ENCODE measurements at regions of chr3 and their contacts with region 1.

Region 1: GRCh38 chr3:79521238-79521848 is 246.5 kb downstream of the ROBO1 start:
- DNase-seq: no peak
- H3K4me3 ChIP-seq: no peak overlapping the region
- H3K27ac ChIP-seq: no peak overlapping the region
- H3K4me1 ChIP-seq: no peaks in the 10 kb centered on the region
- H3K27me3 ChIP-seq: no peaks in the 10 kb centered on the region
- CTCF ChIP-seq: peak in 2 of 3 experiments; percentile 49 to 64; a peak in 3 of 4 replicates
- EP300 ChIP-seq: no peak
- POLR2A ChIP-seq: no peak
- RAD21 ChIP-seq: peak; percentile 87 to 89

Region 2: GRCh38 chr3:79497447-79498111 is 23.8 kb before region 1 on chr3:
- CTCF ChIA-PET with region 1: interaction called, 18 read pairs
- POLR2A ChIA-PET with region 1: no interaction called
- DNase-seq: no peak
- H3K4me3 ChIP-seq: no peak overlapping the region
- H3K27ac ChIP-seq: no peak overlapping the region
- H3K4me1 ChIP-seq: no peaks in the 10 kb centered on the region
- H3K27me3 ChIP-seq: no peaks in the 10 kb centered on the region
- CTCF ChIP-seq: peak in 2 of 3 experiments; percentile 25 to 39; a peak in 2 of 4 replicates
- EP300 ChIP-seq: no peak
- POLR2A ChIP-seq: no peak
- RAD21 ChIP-seq: peak; percentile 68 to 78

Region 3: DNA sequence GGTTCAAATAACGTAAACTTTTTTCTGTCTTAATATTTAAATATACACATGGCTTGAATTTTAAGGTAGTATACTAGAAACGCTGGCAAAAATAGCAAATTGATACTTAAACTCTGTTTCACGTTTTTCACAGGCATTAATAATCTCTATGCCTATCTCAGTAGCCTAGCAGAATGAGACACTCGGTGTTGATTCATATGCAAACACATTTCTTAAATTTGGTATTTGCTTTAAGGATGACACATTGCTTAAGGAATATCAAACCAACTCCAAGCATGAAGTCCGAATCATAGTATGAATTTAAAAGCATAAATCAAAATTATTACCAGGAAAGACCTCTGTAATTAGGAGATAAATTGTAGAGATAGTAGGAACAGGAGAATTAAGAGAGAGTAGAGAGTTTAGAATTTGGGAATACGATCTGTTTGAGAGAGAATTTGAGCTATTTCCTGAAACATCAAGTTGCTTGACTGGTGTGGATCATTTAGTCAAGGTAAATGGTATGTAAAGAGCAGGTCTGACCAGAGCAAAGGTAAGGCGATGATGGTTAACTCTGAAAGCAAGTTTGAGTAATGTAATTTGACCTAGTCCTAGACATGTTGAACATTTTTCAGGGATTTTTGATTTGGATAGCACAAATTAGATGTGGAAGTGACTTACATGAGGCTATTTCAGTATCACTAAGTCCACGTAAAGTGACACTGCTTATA is 10.4 kb after region 1 on chr3:
- CTCF ChIA-PET with region 1: interaction called, 12 read pairs
- POLR2A ChIA-PET with region 1: no interaction called
- DNase-seq: no peak
- H3K4me3 ChIP-seq: no peak overlapping the region
- H3K27ac ChIP-seq: no peak overlapping the region
- H3K4me1 ChIP-seq: no peaks in the 10 kb centered on the region
- H3K27me3 ChIP-seq: no peaks in the 10 kb centered on the region
- CTCF ChIP-seq: no peak
- EP300 ChIP-seq: no peak
- POLR2A ChIP-seq: no peak
- RAD21 ChIP-seq: no peak

Region 4: GRCh38 chr3:79729096-79729495 is 207.8 kb after region 1 on chr3:
- CTCF ChIA-PET with region 1: interaction called, 19 read pairs
- POLR2A ChIA-PET with region 1: no interaction called
- DNase-seq: no peak
- H3K4me3 ChIP-seq: no peak overlapping the region
- H3K27ac ChIP-seq: no peak overlapping the region
- H3K4me1 ChIP-seq: 0 out of 7 replicates have a peak, but pooled peaks cover 0 to 2% (median 0%) of the 10 kb centered on the region in 4 experiments
- H3K27me3 ChIP-seq: no peaks in the 10 kb centered on the region
- CTCF ChIP-seq: no peak
- EP300 ChIP-seq: no peak
- POLR2A ChIP-seq: no peak
- RAD21 ChIP-seq: no peak

Measured in H1 (cell line).